Panc1 (cell line): ENCODE measurements at regions of chr16 and their contacts with region 1.

Region 1: DNA sequence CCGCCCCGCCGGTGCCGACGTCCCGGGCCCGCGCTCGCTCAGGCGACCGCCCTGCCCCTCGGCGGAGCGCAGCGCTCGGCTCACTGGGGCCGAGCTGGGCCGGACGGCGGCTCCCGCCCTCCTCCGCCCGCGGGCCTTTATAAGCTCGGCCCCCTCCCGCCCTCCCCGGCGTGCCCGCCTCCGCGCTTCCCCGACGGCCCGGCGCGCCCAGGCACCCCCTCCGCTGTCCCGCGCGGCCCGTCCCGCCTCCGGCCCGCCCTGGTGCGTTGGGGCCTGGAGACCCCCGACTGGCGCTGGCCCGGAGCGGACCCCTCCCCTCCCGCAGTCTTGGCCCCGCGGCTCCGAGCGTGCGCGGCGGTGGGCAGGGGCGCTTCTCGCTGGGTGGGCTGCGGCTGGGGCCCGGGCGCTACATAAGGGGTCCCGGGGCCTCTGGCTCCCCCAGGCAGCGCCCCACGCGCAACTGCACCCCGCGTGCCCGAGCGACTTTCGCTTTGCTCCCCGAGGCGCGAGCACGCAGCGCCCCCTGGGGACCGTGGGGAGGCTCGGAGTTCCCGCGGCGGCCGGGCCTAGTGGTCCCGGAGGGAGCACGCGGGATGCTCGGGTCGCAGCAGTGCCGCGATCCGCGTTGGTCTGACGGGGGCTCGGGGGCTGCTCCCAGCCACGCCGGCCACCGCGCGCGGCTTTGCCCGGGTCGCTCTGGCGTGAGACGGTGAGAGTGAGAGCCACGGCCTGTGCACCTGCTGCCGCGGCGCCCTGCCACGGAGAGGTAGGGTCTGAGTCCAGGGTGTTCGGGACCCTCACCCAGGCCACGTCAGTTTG is at the start of gene PIEZO1:
- DNase-seq: no peak
- ATAC-seq: peak; percentile 85
- H3K4me3 ChIP-seq: peak within 1 kb of the TSS; percentile 61 to 69
- H3K27ac ChIP-seq: peak within 1 kb of the TSS; percentile 85
- H3K4me1 ChIP-seq: peaks cover 22% of the 10 kb centered on the region
- H3K27me3 ChIP-seq: no peaks in the 10 kb centered on the region
- CTCF ChIP-seq: peak; percentile 91
- total RNA-seq, gene PIEZO1: 175 TPM

Region 2: DNA sequence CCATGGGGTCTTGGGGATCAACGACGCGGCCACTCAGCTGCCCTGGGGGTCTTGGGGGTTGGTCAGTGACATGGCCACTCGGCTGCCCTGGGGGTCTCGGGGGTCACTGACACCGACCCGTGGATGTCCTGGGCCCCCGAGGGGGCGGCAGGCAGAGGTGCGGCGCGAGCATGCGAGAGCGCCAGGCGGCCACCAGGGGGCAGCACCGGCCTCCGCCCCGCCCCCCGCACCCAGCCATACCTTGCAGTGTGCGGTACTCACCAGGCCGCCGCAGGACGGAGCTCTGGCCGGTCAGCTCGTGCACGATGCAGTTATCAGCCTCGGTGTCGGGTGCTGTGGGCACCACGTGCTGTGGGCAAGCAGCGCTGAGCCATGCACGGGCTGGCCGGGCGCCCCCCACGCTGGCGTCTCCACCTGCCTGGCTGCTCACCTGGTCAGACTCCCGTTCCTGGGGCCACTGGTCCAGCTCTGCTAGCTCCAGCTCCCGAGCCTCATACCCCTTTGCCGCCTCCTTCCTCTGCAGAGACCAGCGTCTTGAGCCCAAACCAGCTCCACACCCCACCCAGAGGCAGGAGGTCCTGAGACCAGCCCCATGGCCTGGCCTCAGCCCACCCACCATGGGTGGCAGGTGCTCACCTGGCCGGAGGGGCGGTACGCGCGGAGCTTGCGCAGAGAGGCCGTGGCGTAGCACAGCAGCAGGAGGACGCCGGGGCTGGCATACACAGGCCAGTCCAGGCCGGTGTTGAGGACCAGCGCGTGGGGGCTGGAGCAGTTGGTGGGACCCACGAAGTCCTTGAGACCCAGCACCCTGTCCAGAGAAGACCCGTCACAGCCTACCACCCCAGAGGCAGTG is 47.8 kb before region 1 on chr16:
- CTCF ChIA-PET with region 1: no interaction called
- POLR2A ChIA-PET with region 1: interaction called, 3 read pairs
- in situ Hi-C with region 1: no loop called
- intact Hi-C with region 1: loop called (anchors 10 kb)
- DNase-seq: no peak
- ATAC-seq: peak; percentile 82
- H3K4me3 ChIP-seq: no peak overlapping the region
- H3K27ac ChIP-seq: no peak overlapping the region
- H3K4me1 ChIP-seq: no peaks in the 10 kb centered on the region
- H3K27me3 ChIP-seq: no peaks in the 10 kb centered on the region
- CTCF ChIP-seq: peak; percentile 93

Region 3: GRCh38 chr16:88764080-88764479 is 21.2 kb before region 1 on chr16:
- CTCF ChIA-PET with region 1: interaction called, 10 read pairs
- POLR2A ChIA-PET with region 1: interaction called, 4 read pairs
- in situ Hi-C with region 1: no loop called
- intact Hi-C with region 1: no loop called
- DNase-seq: no peak
- ATAC-seq: no peak
- H3K4me3 ChIP-seq: no peak overlapping the region
- H3K27ac ChIP-seq: 0 out of 2 replicates have a peak overlapping the region, but pooled peaks have one; percentile 66
- H3K4me1 ChIP-seq: peaks cover 84% of the 10 kb centered on the region
- H3K27me3 ChIP-seq: no peaks in the 10 kb centered on the region
- CTCF ChIP-seq: no peak

Region 4: DNA sequence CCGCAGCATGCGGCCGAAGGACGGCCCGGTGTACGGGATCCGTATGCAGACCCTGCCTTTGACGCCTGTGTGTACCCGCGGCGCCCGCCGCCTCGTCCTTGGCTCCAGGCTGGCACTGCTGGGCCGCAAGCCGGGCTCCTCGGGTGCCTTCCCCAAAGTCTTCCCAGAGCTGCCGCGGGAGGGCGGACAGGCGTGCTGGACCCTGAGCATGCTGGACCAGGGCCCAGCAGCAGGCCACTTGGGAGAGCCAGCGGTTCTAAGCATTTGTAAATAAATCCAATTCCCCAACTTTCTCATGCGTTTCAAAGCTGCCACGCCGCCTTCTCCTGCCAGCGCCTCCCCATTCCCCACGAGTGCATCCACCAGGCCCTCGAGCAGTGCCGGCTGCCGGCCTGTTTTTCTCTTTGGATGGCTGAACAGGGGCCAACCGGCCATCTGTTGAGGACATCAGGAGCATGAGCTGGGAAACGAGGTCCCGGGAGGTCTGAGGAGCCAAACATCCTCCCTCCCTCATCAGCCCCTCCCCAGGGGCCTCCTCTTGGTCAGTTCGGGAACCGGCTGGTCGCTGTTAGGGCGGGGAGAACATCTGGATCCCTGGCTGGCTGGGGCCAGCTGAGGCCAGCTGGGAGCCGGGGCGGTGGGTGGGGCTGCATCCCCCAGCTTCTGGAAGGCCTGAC is 101.7 kb after region 1 on chr16:
- CTCF ChIA-PET with region 1: no interaction called
- POLR2A ChIA-PET with region 1: no interaction called
- in situ Hi-C with region 1: no loop called
- intact Hi-C with region 1: no loop called
- DNase-seq: no peak
- ATAC-seq: no peak
- H3K4me3 ChIP-seq: no peak overlapping the region
- H3K27ac ChIP-seq: no peak overlapping the region
- H3K4me1 ChIP-seq: peaks cover 7% of the 10 kb centered on the region
- H3K27me3 ChIP-seq: no peaks in the 10 kb centered on the region
- CTCF ChIP-seq: no peak